ENCODE measurements at regions of chr1 and their contacts with region 1.

Region 1: GRCh38 chr1:241485554-241485992 is 34.0 kb downstream of the FH start:
- DNase-seq: no peak
- H3K4me3 Mint-ChIP-seq: no peak overlapping the region
- H3K27ac Mint-ChIP-seq: no peak overlapping the region
- H3K4me1 Mint-ChIP-seq: no peaks in the 10 kb centered on the region
- H3K27me3 Mint-ChIP-seq: no peaks in the 10 kb centered on the region

Region 2: DNA sequence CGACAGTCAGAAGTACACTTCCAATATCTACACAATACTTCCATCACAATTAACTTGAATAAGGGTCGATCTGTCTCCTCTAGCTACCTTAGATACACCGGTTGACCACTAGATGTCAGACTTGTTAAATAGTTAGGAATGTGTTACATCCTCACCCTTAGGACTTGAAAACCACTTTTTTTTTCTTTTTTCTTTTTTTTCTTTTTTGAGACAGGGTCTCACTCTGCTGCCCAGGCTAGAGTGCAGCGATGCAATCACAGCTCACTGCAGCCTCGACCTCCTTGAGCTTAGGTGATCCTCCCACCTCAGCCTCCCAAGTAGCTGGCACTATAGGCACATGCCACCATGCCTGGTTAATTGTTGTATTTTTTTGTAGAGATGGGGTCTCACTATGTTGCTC is 753.2 kb before region 1 on chr1:
- intact Hi-C with region 1: loop called (anchors 10 kb)
- DNase-seq: no peak
- H3K4me3 Mint-ChIP-seq: no peak overlapping the region
- H3K27ac Mint-ChIP-seq: no peak overlapping the region
- H3K4me1 Mint-ChIP-seq: no peaks in the 10 kb centered on the region
- H3K27me3 Mint-ChIP-seq: no peaks in the 10 kb centered on the region

Region 3: DNA sequence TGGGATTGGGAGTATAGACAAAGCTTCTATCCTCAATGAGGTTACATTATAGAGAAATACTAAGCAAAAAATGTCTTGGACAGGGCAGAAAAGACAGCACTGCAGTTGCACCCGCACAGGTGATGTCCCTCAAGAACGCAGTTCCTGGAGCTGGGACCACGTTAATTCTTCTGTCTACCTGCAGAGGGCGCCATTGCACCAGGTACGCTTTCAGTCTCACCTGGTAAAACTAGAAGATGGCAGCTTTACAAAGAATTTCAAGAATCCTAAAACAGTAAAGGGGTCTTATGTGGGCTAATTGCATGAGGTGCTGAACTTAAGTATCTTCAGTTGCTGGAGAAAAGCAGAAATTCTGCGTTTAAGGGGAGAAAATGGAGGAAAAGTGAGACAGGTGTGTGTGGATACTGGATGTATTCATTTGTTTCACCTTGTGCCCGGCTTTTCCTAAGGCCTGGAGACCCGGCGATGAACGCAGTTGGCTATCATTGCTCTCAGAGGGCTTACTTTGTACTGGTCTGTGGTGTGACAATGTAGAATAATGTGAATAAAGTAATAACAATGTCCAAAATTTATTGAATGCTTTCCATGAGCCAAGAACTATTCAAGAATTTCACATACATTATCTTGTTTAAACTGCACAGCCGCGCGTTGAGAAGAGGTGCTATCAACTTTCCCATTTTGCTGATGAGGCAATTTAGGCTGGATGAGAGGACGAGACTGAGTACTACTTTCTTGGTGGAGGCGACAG is 597.4 kb before region 1 on chr1:
- intact Hi-C with region 1: loop called (anchors 10 kb)
- DNase-seq: no peak
- H3K4me3 Mint-ChIP-seq: no peak overlapping the region
- H3K27ac Mint-ChIP-seq: no peak overlapping the region
- H3K4me1 Mint-ChIP-seq: no peaks in the 10 kb centered on the region
- H3K27me3 Mint-ChIP-seq: no peaks in the 10 kb centered on the region

Measured in activated T-helper 2 cell treated with anti-CD3 and anti-CD28 coated beads, Interferon-gamma antibody, Interleukin-2, Interleukin-4, amounts not matched to agents 10 μg/mL and 5 μg/mL and 100 μg/mL, durations not matched to agents 14 hours and 24 hours and 36 hours (primary cell).